Activated naive CD4-positive, alpha-beta T cell treated with anti-CD3 and anti-CD28 coated beads for 36 hours (primary cell): ENCODE measurements at regions of chr3 and their contacts with region 1.

Region 1: DNA sequence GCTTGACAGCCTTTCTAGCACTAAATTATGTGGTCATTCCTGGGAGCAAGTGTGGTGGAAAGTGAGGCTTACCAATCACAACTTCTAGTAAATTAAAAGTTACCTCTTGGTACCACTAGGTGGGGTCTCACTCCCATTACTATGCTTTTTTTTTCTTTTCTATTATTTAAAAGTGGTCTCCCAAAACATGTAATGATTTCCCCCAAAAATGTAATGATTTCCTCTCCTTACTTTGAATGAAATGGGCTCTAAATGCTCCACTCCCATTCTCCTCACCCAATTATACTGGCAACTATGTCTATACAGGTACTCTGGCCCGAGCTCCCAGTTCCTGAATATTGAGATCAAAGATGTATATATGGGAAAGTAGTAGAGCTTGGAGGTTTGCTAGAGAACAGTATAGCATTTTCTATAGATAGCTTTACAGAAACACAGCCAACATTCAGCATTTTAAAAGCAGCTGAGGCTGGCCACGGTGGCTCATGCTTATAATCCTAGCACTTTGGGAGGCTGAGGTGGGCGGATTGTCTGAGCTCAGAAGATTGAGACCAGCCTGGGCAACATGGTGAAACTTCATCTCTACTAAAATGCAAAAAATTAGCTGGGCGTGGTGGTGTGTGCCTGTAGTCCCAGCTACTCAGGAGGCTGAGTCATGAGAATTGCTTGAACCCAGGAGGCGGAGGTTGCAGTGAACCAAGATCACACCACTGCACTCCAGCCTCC is 70.9 kb downstream of the DCUN1D1 start:
- DNase-seq: no peak
- H3K4me3 Mint-ChIP-seq: no peak overlapping the region
- H3K27ac Mint-ChIP-seq: peak overlapping the region; percentile 54
- H3K4me1 Mint-ChIP-seq: peaks cover 45% of the 10 kb centered on the region
- H3K27me3 Mint-ChIP-seq: no peaks in the 10 kb centered on the region

Region 2: GRCh38 chr3:182792901-182793662 is 116.4 kb before region 1 on chr3 and contains the start of gene ATP11B:
- CTCF ChIA-PET with region 1: no interaction called
- intact Hi-C with region 1: no loop called
- DNase-seq: peak; percentile 70
- H3K4me3 Mint-ChIP-seq: peak within 1 kb of the TSS; percentile 99
- H3K27ac Mint-ChIP-seq: peak within 1 kb of the TSS; percentile 97
- H3K4me1 Mint-ChIP-seq: peaks cover 25% of the 10 kb centered on the region
- H3K27me3 Mint-ChIP-seq: no peaks in the 10 kb centered on the region
- total RNA-seq, gene ATP11B: 86.6 to 92.3 TPM

Region 3: DNA sequence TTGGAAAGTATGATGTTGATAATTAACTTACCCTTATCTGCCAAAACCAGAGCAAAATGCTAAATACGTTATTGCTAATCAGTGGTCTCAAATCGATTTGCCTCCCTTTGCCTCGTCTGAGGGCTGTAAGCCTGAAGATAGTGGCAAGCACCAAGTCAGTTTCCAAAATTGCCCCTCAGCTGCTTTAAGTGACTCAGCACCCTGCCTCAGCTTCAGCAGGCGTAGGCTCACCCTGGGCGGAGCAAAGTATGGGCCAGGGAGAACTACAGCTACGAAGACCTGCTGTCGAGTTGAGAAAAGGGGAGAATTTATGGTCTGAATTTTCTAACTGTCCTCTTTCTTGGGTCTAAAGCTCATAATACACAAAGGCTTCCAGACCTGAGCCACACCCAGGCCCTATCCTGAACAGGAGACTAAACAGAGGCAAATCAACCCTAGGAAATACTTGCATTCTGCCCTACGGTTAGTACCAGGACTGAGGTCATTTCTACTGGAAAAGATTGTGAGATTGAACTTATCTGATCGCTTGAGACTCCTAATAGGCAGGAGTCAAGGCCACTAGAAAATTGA is 11.1 kb after region 1 on chr3:
- CTCF ChIA-PET with region 1: interaction called, 16 read pairs
- intact Hi-C with region 1: no loop called
- DNase-seq: no peak
- H3K4me3 Mint-ChIP-seq: no peak overlapping the region
- H3K27ac Mint-ChIP-seq: no peak overlapping the region
- H3K4me1 Mint-ChIP-seq: no peaks in the 10 kb centered on the region
- H3K27me3 Mint-ChIP-seq: no peaks in the 10 kb centered on the region

Region 4: GRCh38 chr3:182980204-182981037 is 70.9 kb after region 1 on chr3 and contains the start of gene DCUN1D1:
- CTCF ChIA-PET with region 1: interaction called, 3 read pairs
- intact Hi-C with region 1: loop called (anchors 1 kb)
- DNase-seq: peak; percentile 88
- H3K4me3 Mint-ChIP-seq: peak within 1 kb of the TSS; percentile 88
- H3K27ac Mint-ChIP-seq: peak within 1 kb of the TSS; percentile 83
- H3K4me1 Mint-ChIP-seq: peaks cover 20% of the 10 kb centered on the region
- H3K27me3 Mint-ChIP-seq: no peaks in the 10 kb centered on the region
- total RNA-seq, gene DCUN1D1: 38.4 to 40.5 TPM

Region 5: DNA sequence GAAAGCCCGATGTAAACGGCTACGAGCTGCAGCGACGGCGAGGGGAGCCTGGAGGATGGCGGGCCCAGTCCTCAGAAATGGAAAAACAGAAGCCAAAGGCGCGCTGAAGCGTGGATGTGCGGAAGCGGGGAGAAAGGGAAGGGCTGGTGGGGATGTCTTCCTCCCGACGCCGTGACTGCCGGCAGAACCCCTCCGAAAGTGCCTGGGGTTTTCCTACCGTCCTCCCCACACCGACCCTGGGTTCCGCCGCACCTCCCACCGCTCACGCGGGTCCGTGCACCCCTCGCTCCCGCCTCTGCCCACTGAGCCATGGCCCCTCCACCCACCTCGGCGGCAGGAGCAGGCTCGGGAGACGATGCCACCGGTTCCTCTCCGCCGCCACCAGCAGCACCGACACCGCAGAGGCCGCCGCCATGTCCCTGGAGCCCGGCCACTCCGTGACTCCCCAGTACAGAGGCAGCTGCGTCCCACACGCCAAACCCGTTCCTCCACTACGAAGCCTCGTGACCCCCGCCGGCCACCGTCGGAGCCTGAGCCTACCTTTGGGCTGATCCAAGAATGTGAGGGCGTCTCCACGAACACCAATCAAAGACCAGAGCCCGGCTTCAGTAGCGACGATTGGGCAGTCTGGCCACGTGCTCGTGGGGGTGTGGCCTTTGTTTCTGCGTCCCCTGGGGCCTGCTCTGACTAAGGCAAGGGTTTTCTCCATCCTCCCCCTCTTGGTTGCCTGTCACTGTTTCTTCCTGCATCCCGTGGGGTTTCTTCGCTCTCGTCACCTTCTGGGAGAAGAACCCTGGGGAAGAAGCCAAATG is 189.8 kb after region 1 on chr3 and contains the start of gene MCCC1:
- CTCF ChIA-PET with region 1: interaction called, 5 read pairs
- intact Hi-C with region 1: loop called (anchors 1 kb)
- DNase-seq: peak; percentile 99
- H3K4me3 Mint-ChIP-seq: peak within 1 kb of the TSS; percentile 97
- H3K27ac Mint-ChIP-seq: peak within 1 kb of the TSS; percentile 91
- H3K4me1 Mint-ChIP-seq: peaks cover 33% of the 10 kb centered on the region
- H3K27me3 Mint-ChIP-seq: no peaks in the 10 kb centered on the region
- total RNA-seq, gene MCCC1: 21.0 to 24.9 TPM

Region 6: GRCh38 chr3:183178629-183179549 is 269.4 kb after region 1 on chr3:
- CTCF ChIA-PET with region 1: no interaction called
- intact Hi-C with region 1: loop called (anchors 1 kb)
- DNase-seq: peak; percentile 84
- H3K4me3 Mint-ChIP-seq: peak overlapping the region; percentile 76
- H3K27ac Mint-ChIP-seq: no peak overlapping the region
- H3K4me1 Mint-ChIP-seq: peaks cover 11% of the 10 kb centered on the region
- H3K27me3 Mint-ChIP-seq: peaks cover 30% of the 10 kb centered on the region

Region 7: DNA sequence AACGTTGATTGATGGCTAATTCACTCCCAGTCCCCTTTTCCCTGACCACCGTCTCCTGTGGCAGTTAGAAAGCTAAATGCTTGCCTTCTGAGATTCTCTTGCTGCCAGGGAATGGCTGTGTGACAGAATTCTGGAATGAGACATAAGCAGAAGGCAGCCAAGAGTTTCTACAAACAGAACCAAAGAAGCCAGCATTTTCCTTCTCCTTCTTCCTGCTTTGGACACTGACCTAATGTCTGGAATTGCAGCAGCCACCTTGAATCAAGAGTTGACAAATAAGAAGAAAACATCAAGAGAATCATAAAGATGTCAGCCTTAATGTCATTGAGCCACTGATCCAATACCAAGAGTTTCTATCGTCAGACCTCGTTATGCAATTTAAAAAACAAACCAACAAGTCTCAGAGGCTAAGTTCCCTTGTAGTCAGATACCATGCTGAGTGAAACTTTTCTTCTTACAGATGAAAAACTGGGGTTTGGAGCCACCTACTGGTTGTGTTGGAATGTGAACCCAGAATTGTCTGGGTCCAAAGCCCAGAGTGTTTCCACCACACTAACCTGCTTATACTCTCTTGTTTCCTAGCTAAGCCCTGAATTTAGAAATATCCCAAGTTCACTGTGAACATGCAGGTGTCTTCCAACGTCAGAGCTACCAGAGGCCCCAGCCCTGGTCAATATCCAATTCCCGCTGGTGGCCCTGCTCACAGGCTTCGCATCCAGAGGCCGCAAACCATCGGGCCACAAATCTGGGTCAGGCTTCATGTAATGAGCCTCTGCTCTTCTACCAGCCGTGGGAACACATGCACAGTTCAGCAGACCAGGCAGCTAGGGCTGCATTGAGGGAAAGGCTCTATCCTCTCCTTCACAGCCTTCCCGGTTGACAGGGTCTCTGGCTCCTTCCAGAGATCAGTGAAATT is 476.5 kb after region 1 on chr3:
- CTCF ChIA-PET with region 1: no interaction called
- intact Hi-C with region 1: loop called (anchors 1 kb)
- DNase-seq: peak; percentile 79
- H3K4me3 Mint-ChIP-seq: no peak overlapping the region
- H3K27ac Mint-ChIP-seq: no peak overlapping the region
- H3K4me1 Mint-ChIP-seq: peaks cover 9% of the 10 kb centered on the region
- H3K27me3 Mint-ChIP-seq: no peaks in the 10 kb centered on the region